ENCODE measurements at regions of chr2 and their contacts with region 1.

Region 1: GRCh38 chr2:230614913-230615332 is 97.7 kb upstream of the CAB39 start:
- DNase-seq: peak; percentile 79
- H3K4me3 Mint-ChIP-seq: no peak overlapping the region
- H3K27ac Mint-ChIP-seq: peak overlapping the region; percentile 71
- H3K4me1 Mint-ChIP-seq: peaks cover 33% of the 10 kb centered on the region
- H3K27me3 Mint-ChIP-seq: no peaks in the 10 kb centered on the region

Region 2: GRCh38 chr2:229780856-229781773 is 833.8 kb before region 1 on chr2:
- CTCF ChIA-PET with region 1: no interaction called
- intact Hi-C with region 1: loop called (anchors 2 kb)
- DNase-seq: no peak
- H3K4me3 Mint-ChIP-seq: no peak overlapping the region
- H3K27ac Mint-ChIP-seq: no peak overlapping the region
- H3K4me1 Mint-ChIP-seq: peaks cover 11% of the 10 kb centered on the region
- H3K27me3 Mint-ChIP-seq: no peaks in the 10 kb centered on the region

Region 3: GRCh38 chr2:229910832-229911412 is 704.0 kb before region 1 on chr2:
- CTCF ChIA-PET with region 1: no interaction called
- intact Hi-C with region 1: loop called (anchors 10 kb)
- DNase-seq: peak; percentile 36
- H3K4me3 Mint-ChIP-seq: no peak overlapping the region
- H3K27ac Mint-ChIP-seq: peak overlapping the region; percentile 7
- H3K4me1 Mint-ChIP-seq: peaks cover 53% of the 10 kb centered on the region
- H3K27me3 Mint-ChIP-seq: no peaks in the 10 kb centered on the region

Region 4: GRCh38 chr2:230007931-230008707 is 606.8 kb before region 1 on chr2:
- CTCF ChIA-PET with region 1: interaction called, 8 read pairs
- intact Hi-C with region 1: loop called (anchors 1 kb)
- DNase-seq: peak; percentile 95
- H3K4me3 Mint-ChIP-seq: no peak overlapping the region
- H3K27ac Mint-ChIP-seq: no peak overlapping the region
- H3K4me1 Mint-ChIP-seq: peaks cover 5% of the 10 kb centered on the region
- H3K27me3 Mint-ChIP-seq: no peaks in the 10 kb centered on the region

Region 5: DNA sequence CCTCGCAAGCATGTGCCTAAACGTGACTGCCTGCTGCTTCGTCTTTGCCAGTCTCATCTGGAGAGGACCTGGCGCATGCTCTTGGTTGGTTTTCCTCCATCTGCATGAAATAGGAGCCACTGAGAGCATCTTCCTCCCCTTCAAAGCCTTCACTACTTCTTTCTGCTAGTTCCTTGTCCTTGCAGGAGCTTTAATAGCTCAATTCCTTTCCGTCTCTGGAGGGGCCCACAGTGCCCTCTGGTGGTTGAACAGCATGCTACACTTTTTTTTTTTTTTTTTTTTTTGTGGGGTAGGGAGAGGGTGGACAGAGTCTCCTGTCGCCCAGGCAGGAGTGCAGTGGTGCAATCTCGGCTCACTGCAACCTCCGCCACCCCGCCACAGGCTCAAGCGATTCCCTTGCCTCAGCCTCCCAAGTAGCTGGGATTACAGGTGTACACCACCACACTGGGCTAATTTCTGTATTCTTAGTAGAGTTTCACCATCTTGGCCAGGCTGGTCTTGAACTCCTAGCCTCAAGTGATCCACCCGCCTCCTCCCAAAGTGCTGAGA is 454.7 kb before region 1 on chr2:
- CTCF ChIA-PET with region 1: interaction called, 7 read pairs
- intact Hi-C with region 1: loop called (anchors 2 kb)
- DNase-seq: peak; percentile 66
- H3K4me3 Mint-ChIP-seq: no peak overlapping the region
- H3K27ac Mint-ChIP-seq: no peak overlapping the region
- H3K4me1 Mint-ChIP-seq: peaks cover 3% of the 10 kb centered on the region
- H3K27me3 Mint-ChIP-seq: no peaks in the 10 kb centered on the region

Region 6: DNA sequence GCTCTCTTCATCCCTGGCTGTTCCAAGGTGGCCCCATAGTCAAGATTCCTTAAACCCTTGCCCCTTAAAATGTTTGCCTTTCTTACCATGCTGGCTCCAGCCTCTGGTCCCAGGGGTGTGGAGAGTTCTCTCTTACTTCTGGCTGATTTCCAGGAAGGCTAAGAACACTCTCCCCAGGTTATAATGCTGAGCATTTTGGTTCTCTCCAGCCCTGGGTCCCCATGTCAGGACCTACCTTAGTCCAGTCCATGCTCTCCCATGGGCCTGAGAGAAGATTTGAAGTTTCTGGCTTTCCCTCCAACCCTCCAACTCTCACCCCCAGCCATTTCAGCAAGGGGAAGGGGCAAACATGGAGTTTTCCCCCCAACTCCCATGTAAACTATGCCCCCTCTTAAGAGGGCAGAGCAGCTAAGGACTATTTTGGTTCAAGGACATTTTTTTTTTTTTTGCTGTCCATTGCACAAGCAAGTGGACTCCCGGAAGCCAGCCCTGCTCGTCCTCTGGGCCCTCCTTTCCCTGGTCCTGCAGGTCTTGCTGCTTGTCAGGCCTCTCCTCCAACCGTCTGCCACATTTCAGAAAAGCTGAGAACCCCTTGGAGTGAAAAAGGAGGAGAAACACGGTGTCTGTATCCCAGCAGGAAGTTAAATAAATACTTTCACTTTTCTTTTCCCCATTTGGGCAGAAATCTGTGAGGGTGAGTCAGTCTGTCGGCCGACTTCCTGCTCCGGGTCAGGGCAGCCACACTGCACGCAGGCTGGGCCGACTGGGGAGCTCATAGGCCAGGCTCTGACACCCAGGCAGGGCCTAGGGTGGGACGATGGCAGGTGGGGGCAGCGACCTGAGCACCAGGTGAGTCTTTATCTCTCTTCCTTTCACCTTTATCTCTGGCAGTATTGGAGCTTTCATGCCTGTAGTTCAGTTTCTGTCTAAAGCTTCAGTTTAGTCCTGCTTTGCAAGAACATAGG is 288.2 kb before region 1 on chr2 and contains the start of gene SP140L:
- CTCF ChIA-PET with region 1: interaction called, 5 read pairs
- intact Hi-C with region 1: loop called (anchors 1 kb)
- DNase-seq: peak; percentile 88
- H3K4me3 Mint-ChIP-seq: peak within 1 kb of the TSS; percentile 96
- H3K27ac Mint-ChIP-seq: peak within 1 kb of the TSS; percentile 99
- H3K4me1 Mint-ChIP-seq: peaks cover 60% of the 10 kb centered on the region
- H3K27me3 Mint-ChIP-seq: no peaks in the 10 kb centered on the region
- total RNA-seq, gene SP140L: 41.8 to 44.7 TPM

Region 7: DNA sequence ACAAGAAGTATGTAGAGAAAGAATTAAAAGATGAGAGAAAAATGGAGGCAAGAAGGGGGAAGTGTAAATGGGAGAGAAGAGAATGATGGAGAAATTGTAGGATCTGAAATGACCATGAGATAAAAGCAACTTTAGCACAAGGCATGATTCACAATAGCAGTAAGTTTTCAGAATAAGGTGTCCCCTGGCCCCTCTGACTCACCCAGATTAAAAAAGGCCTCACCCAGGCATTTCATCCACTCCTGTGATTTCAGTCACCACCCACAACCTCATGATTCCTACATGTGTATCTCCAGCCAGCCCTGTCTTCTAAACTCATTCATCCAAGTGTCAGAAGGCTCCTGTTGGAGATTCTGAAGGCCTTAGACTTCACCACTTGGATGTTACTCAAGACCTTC is 142.3 kb before region 1 on chr2:
- CTCF ChIA-PET with region 1: no interaction called
- intact Hi-C with region 1: loop called (anchors 1 kb)
- DNase-seq: peak; percentile 79
- H3K4me3 Mint-ChIP-seq: peak overlapping the region; percentile 1
- H3K27ac Mint-ChIP-seq: peak overlapping the region; percentile 74
- H3K4me1 Mint-ChIP-seq: peaks cover 31% of the 10 kb centered on the region
- H3K27me3 Mint-ChIP-seq: no peaks in the 10 kb centered on the region